Activated B cell treated with CpG ODN at 0.5 μM for 24 hours (primary cell): ENCODE measurements at regions of chr6 and their contacts with region 1.

Region 1: DNA sequence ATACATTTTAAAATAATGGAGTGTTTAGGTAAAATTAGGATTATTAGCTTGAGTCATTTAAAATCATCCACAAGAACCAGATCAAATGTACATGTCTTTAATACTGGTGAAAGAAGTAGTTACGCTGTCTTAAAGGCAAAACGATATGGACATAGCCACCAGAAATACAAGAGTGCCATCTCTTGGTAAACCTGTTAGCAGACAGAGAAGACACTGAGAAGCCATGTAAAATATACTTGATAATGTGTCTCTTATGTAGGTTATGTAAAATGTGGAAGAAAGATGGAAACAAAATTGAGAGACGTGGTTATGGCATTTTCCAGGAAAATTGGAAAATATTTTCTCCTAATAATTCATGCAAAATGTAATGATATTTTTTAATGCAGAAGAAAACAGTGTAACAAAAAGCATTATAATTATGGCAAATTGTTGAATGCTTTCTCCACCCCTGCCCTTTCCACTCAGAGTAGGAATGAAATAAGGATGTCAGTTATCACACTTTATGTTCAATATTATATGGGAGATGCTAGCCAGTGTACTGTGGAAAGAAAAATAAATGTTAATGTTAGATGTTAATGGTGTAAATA is 12.2 kb upstream of the SLC17A2 start:
- DNase-seq: no peak
- ATAC-seq: peak; percentile 60
- H3K4me3 Mint-ChIP-seq: no peak overlapping the region
- H3K27ac Mint-ChIP-seq: no peak overlapping the region
- H3K4me1 Mint-ChIP-seq: peaks cover 16% of the 10 kb centered on the region
- H3K27me3 Mint-ChIP-seq: peaks cover 6% of the 10 kb centered on the region
- CTCF ChIP-seq: no peak

Region 2: DNA sequence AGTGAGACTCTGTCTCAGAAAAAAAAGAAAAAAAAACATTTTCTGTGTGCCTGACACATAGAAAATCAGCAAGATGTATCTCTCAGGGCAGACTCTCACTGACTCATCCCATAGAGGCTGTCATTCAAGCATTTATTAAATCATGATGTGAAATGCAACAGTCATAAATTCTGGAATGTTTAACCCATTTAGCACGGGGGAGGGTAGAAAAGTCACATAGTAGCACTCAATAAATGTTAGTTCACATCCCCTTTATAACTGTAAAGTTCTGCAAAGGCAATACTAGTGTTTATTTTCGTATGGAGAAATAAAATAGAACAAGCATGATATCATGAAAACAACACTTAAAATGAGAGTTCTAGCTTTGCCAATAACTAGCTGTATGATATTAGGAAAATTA is 679.0 kb before region 1 on chr6:
- CTCF ChIA-PET with region 1: interaction called, 7 read pairs
- POLR2A ChIA-PET with region 1: no interaction called
- intact Hi-C with region 1: loop called (anchors 1 kb)
- DNase-seq: no peak
- ATAC-seq: no peak
- H3K4me3 Mint-ChIP-seq: no peak overlapping the region
- H3K27ac Mint-ChIP-seq: no peak overlapping the region
- H3K4me1 Mint-ChIP-seq: peaks cover 2% of the 10 kb centered on the region
- H3K27me3 Mint-ChIP-seq: peaks cover 5% of the 10 kb centered on the region
- CTCF ChIP-seq: no peak

Region 3: GRCh38 chr6:25556516-25556915 is 386.1 kb before region 1 on chr6:
- CTCF ChIA-PET with region 1: interaction called, 3 read pairs
- POLR2A ChIA-PET with region 1: no interaction called
- intact Hi-C with region 1: loop called (anchors 1 kb)
- DNase-seq: peak; percentile 47
- ATAC-seq: peak; percentile 47
- H3K4me3 Mint-ChIP-seq: no peak overlapping the region
- H3K27ac Mint-ChIP-seq: no peak overlapping the region
- H3K4me1 Mint-ChIP-seq: peaks cover 9% of the 10 kb centered on the region
- H3K27me3 Mint-ChIP-seq: no peaks in the 10 kb centered on the region
- CTCF ChIP-seq: peak; percentile 90

Region 4: DNA sequence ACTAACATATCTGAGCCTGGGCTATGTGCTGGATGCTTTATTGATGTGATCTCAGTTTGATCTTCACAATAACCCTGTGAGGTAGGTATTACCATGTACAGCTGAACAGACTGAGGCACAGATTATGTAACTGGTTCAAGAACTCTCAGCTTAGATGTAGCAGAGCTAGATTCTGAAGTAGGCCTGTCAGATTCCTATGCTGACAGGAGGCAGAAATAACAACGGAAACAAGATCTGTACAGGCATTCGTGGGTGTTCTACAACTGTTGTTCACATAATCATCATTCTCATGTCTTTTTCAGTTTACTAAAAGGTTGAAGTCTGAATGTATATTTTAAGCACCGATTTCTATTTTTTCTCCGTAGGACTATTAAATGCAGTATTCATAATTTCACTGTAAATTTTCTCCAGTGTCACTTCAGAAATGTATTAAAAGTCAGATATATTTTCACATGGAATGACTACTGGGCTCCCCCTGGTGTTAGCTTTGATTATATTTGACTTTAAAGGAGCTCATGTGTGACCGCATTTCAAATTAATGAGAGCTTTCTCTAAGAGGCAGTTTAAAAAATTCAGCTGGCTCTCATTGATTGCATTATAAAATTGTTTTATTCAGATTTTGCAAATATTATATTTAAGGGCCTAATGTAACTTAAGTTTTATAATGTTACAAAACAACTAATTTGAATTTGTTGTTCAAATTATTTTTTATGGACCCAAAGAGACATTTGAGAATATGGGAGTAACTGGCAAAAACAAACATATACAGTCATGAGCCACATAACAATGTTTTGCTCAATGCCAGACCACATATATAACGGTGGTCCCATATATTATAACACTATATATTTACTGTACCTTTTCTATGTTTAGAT is 224.6 kb before region 1 on chr6:
- CTCF ChIA-PET with region 1: interaction called, 7 read pairs
- POLR2A ChIA-PET with region 1: no interaction called
- intact Hi-C with region 1: loop called (anchors 1 kb)
- DNase-seq: no peak
- ATAC-seq: no peak
- H3K4me3 Mint-ChIP-seq: no peak overlapping the region
- H3K27ac Mint-ChIP-seq: no peak overlapping the region
- H3K4me1 Mint-ChIP-seq: no peaks in the 10 kb centered on the region
- H3K27me3 Mint-ChIP-seq: peaks cover 15% of the 10 kb centered on the region
- CTCF ChIP-seq: no peak

Region 5: GRCh38 chr6:25788305-25788922 is 154.2 kb before region 1 on chr6:
- CTCF ChIA-PET with region 1: interaction called, 12 read pairs
- POLR2A ChIA-PET with region 1: no interaction called
- intact Hi-C with region 1: loop called (anchors 1 kb)
- DNase-seq: no peak
- ATAC-seq: peak; percentile 50
- H3K4me3 Mint-ChIP-seq: no peak overlapping the region
- H3K27ac Mint-ChIP-seq: no peak overlapping the region
- H3K4me1 Mint-ChIP-seq: no peaks in the 10 kb centered on the region
- H3K27me3 Mint-ChIP-seq: peaks cover 3% of the 10 kb centered on the region
- CTCF ChIP-seq: no peak

Region 6: DNA sequence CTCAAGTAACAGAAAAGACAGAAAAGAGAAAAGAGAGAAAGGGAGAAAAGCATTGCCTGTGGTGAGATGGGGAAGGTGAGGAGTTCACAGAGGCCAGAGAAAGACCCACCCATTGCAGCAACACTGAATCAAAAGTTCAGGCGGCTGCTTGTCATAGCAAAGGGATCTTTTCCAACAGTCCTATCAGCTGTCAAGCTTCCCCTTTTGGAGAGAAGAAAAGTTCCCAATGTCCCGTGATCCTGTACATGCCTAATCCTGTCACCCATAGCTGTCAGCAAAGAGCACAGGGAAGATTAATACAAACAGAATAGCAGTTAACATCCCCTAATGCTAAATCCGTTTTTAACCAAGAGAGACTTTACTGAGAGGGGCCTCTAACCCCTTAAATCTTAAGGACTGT is 11.1 kb after region 1 on chr6:
- CTCF ChIA-PET with region 1: no interaction called
- POLR2A ChIA-PET with region 1: no interaction called
- intact Hi-C with region 1: no loop called
- DNase-seq: no peak
- ATAC-seq: no peak
- H3K4me3 Mint-ChIP-seq: no peak overlapping the region
- H3K27ac Mint-ChIP-seq: no peak overlapping the region
- H3K4me1 Mint-ChIP-seq: peaks cover 8% of the 10 kb centered on the region
- H3K27me3 Mint-ChIP-seq: no peaks in the 10 kb centered on the region
- CTCF ChIP-seq: no peak